Esophagus muscularis mucosa (tissue), 4 donors: ENCODE measurements at regions of chr18 and their contacts with region 1.

Region 1: GRCh38 chr18:22933206-22933957 is at the start of gene RBBP8:
- DNase-seq: peak; percentile 93
- H3K4me3 ChIP-seq: peak within 1 kb of the TSS; percentile 73 to 89 (median 84)
- H3K27ac ChIP-seq: peak within 1 kb of the TSS; percentile 96 to 99 (median 98)
- H3K4me1 ChIP-seq: peaks cover 0 to 15% (median 14%) of the 10 kb centered on the region in 4 donors
- H3K27me3 ChIP-seq: no peaks in the 10 kb centered on the region
- CTCF ChIP-seq: no peak
- EP300 ChIP-seq: no peak
- POLR2A ChIP-seq: peak; percentile 40
- total RNA-seq, gene RBBP8: 12.4 to 23.9 (median 15.4) TPM

Region 2: GRCh38 chr18:22846088-22846683 is 87.2 kb before region 1 on chr18:
- intact Hi-C with region 1: loop called (anchors 5 kb)
- DNase-seq: no peak
- H3K4me3 ChIP-seq: no peak overlapping the region
- H3K27ac ChIP-seq: no peak overlapping the region
- H3K4me1 ChIP-seq: peaks cover 0 to 32% (median 0%) of the 10 kb centered on the region in 4 donors
- H3K27me3 ChIP-seq: no peaks in the 10 kb centered on the region
- CTCF ChIP-seq: peak in 2 of 3 experiments; percentile 27 to 40
- EP300 ChIP-seq: no peak
- POLR2A ChIP-seq: no peak

Region 3: DNA sequence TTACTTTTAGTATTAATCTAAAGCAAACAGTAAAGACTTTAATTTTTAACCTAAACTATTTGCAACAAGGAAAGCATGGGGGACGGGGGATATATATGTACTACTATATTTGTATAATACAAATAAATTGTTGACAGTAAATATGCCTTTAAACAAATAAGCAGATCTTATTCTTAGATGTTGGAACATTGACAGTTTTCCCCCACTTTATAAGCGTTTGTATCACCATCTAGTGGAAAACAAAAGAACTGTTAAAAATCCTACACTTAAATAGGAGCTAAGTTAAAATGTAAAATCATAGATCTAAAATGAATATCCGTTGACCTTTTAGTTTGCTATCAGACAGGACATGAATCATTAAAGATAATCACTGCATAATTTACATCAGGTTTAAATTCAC is 49.8 kb after region 1 on chr18:
- intact Hi-C with region 1: loop called (anchors 5 kb)
- DNase-seq: no peak
- H3K4me3 ChIP-seq: no peak overlapping the region
- H3K27ac ChIP-seq: no peak overlapping the region
- H3K4me1 ChIP-seq: peaks cover 0 to 8% (median 5%) of the 10 kb centered on the region in 4 donors
- H3K27me3 ChIP-seq: no peaks in the 10 kb centered on the region
- CTCF ChIP-seq: peak; percentile 46 to 54 (median 51)
- EP300 ChIP-seq: no peak
- POLR2A ChIP-seq: no peak

Region 4: GRCh38 chr18:23416298-23416697 is 482.9 kb after region 1 on chr18:
- intact Hi-C with region 1: loop called (anchors 10 kb)
- DNase-seq: no peak
- H3K4me3 ChIP-seq: no peak overlapping the region
- H3K27ac ChIP-seq: no peak overlapping the region
- H3K4me1 ChIP-seq: no peaks in the 10 kb centered on the region
- H3K27me3 ChIP-seq: no peaks in the 10 kb centered on the region
- CTCF ChIP-seq: no peak
- EP300 ChIP-seq: no peak
- POLR2A ChIP-seq: no peak